Transverse colon (tissue), 4 donors: ENCODE measurements at regions of chr6 and their contacts with region 1.

Region 1: DNA sequence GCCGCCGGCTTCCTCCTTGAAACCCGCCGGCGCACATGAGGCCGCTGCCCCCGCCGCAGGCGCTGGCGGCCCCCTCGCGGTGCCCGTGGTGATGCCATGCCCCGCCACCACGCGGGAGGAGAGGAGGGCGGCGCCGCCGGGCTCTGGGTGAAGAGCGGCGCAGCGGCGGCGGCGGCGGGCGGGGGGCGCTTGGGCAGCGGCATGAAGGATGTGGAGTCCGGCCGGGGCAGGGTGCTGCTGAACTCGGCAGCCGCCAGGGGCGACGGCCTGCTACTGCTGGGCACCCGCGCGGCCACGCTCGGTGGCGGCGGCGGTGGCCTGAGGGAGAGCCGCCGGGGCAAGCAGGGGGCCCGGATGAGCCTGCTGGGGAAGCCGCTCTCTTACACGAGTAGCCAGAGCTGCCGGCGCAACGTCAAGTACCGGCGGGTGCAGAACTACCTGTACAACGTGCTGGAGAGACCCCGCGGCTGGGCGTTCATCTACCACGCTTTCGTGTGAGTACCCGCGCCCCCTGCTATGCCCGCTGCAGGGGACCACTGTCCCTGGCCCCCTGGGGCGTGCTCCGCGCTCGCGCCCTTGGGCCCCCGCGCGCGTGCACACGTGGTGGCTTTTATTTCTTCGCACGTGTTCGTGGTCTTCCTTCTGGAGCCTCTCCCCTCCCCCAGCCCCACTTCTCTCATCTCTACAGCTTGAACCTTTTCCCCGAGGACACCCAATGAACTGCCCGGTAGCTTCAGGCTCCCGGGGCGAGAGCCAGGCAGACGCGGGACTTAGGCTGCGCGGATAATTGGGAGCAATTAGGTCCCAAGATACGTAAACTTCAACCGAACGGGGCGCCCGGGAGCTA is 453 bp downstream of the KCNQ5 start:
- DNase-seq: peak; percentile 30
- H3K4me3 ChIP-seq: peak overlapping the region; percentile 10 to 53 (median 36)
- H3K27ac ChIP-seq: no peak overlapping the region
- H3K4me1 ChIP-seq: peaks cover 2 to 32% (median 20%) of the 10 kb centered on the region in 4 donors
- H3K27me3 ChIP-seq: peaks cover 62% of the 10 kb centered on the region
- CTCF ChIP-seq: no peak
- EP300 ChIP-seq: no peak
- POLR2A ChIP-seq: no peak

Region 2: DNA sequence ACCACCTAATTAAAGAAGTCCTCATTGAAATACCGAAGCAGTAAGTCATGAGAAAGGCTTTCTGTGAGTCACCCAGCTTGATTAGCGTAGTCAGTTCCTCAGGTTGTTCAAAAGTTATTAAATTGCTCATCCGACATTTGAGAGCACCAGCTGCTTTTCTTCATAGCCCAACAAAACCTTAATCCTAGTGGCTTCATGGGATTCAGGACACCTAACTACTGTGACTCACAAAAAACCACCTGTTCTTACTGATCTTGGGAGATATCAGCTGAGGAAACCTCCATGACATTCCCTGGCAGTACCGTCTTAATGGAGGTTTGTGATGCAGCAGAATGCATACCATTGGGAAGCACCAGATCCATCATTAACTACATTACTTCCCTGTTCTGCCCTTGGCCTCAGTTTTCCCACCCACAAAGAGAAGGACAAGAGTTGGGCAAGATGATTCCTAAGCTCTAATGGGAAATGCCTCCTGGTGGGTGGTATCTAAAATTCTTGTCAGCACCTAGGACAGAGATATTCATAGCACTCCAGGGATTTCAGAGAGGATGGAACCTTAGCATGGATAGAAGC is 499.2 kb after region 1 on chr6:
- in situ Hi-C with region 1: loop called in 3 of 4 experiments (anchors 25 kb)
- intact Hi-C with region 1: no loop called
- DNase-seq: no peak
- H3K4me3 ChIP-seq: no peak overlapping the region
- H3K27ac ChIP-seq: no peak overlapping the region
- H3K4me1 ChIP-seq: no peaks in the 10 kb centered on the region
- H3K27me3 ChIP-seq: no peaks in the 10 kb centered on the region
- CTCF ChIP-seq: no peak
- EP300 ChIP-seq: no peak
- POLR2A ChIP-seq: no peak

Region 3: GRCh38 chr6:73129653-73130443 is 507.5 kb after region 1 on chr6:
- in situ Hi-C with region 1: loop called in 2 of 4 experiments (anchors 25 kb)
- intact Hi-C with region 1: no loop called
- DNase-seq: peak; percentile 75
- H3K4me3 ChIP-seq: no peak overlapping the region
- H3K27ac ChIP-seq: no peak overlapping the region
- H3K4me1 ChIP-seq: no peaks in the 10 kb centered on the region
- H3K27me3 ChIP-seq: no peaks in the 10 kb centered on the region
- CTCF ChIP-seq: peak; percentile 76 to 90 (median 86)
- EP300 ChIP-seq: no peak
- POLR2A ChIP-seq: no peak